ENCODE measurements at regions of chr5 and their contacts with region 1.

Region 1: DNA sequence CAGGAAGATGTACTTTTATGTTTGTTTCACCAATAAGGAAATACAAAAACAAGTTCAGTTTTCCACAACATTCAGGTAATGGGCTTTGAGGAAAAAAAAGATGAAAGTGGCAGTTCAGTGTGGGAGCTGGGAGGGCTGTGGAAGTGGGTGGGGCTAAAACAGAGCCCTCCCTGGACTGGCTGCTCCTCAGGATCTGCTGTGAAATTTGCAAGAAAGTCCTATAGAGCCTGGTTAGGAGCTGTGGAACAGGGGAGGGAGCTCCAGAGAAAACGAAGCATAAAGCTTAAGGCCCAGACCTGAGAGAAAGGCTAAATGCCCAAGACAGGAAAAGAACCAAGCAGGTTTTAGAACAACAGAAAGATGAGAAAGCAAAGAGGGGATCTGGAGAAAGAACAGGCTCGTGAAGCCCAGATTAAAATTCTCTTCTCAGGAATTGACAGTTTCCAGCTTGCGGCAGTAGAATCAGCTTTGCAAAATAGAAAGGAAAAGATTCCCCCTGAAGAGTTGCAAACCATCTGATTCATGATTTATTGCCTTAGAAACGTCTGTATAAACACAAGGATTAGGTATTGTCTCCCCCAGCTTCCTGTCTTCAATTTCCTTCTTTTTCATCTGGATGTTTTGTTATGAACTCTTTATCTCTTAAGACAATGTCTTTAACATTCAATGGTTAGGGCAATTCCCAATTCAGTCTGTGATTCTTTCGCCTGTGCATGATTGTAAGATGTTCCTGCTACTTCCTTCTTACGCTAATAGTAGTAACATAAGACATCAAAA is 26.3 kb upstream of the CRHBP start:
- DNase-seq: no peak
- H3K4me3 ChIP-seq: no peak overlapping the region
- H3K27ac ChIP-seq: no peak overlapping the region
- H3K4me1 ChIP-seq: no peaks in the 10 kb centered on the region
- H3K27me3 ChIP-seq: peaks cover 5 to 7% of the 10 kb centered on the region in 2 experiments
- CTCF ChIP-seq: no peak
- POLR2A ChIP-seq: no peak

Region 2: DNA sequence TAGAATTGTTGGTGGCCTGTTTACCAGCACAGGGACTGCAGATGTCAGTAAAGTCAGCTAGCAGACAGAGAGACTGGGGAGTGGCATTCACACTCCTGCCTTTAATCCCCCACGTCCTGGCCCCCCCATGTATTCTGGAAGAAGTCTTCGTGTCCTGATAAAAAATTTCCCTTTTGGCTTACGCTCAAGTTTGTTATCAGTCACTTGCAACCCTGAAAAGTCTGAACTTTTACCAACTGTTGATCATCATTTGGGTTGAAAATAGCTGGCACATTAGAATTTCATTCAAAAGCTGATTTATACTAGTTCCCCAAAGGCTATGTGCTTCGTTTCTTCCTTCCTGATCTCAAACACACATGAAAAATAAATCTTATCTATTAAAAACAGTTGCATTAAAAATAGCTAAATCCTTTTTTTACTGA is 20.6 kb after region 1 on chr5:
- CTCF ChIA-PET with region 1: no interaction called
- POLR2A ChIA-PET with region 1: interaction called, 16 read pairs
- dilution Hi-C with region 1: no loop called
- intact Hi-C with region 1: no loop called
- DNase-seq: peak; percentile 73
- H3K4me3 ChIP-seq: no peak overlapping the region
- H3K27ac ChIP-seq: no peak overlapping the region
- H3K4me1 ChIP-seq: no peaks in the 10 kb centered on the region
- H3K27me3 ChIP-seq: peaks cover 9 to 10% of the 10 kb centered on the region in 2 experiments
- CTCF ChIP-seq: no peak
- POLR2A ChIP-seq: no peak

Region 3: GRCh38 chr5:77316871-77317661 is 390.5 kb after region 1 on chr5:
- CTCF ChIA-PET with region 1: no interaction called
- POLR2A ChIA-PET with region 1: no interaction called
- dilution Hi-C with region 1: no loop called
- intact Hi-C with region 1: no loop called
- DNase-seq: no peak
- H3K4me3 ChIP-seq: no peak overlapping the region
- H3K27ac ChIP-seq: no peak overlapping the region
- H3K4me1 ChIP-seq: no peaks in the 10 kb centered on the region
- H3K27me3 ChIP-seq: no peaks in the 10 kb centered on the region
- CTCF ChIP-seq: no peak
- POLR2A ChIP-seq: no peak

Measured in endothelial cell of umbilical vein (primary cell).